ENCODE measurements at regions of chr1 and their contacts with region 1.

Region 1: GRCh38 chr1:27603681-27604578 is at the start of gene AHDC1:
- DNase-seq: peak; percentile 98
- H3K4me3 ChIP-seq: peak within 1 kb of the TSS; percentile 84
- H3K27ac ChIP-seq: peak within 1 kb of the TSS; percentile 36
- H3K4me1 ChIP-seq: peaks cover 23% of the 10 kb centered on the region
- H3K27me3 ChIP-seq: no peaks in the 10 kb centered on the region
- total RNA-seq, gene AHDC1: 5.3 and 5.8 TPM in 2 replicates

Region 2: DNA sequence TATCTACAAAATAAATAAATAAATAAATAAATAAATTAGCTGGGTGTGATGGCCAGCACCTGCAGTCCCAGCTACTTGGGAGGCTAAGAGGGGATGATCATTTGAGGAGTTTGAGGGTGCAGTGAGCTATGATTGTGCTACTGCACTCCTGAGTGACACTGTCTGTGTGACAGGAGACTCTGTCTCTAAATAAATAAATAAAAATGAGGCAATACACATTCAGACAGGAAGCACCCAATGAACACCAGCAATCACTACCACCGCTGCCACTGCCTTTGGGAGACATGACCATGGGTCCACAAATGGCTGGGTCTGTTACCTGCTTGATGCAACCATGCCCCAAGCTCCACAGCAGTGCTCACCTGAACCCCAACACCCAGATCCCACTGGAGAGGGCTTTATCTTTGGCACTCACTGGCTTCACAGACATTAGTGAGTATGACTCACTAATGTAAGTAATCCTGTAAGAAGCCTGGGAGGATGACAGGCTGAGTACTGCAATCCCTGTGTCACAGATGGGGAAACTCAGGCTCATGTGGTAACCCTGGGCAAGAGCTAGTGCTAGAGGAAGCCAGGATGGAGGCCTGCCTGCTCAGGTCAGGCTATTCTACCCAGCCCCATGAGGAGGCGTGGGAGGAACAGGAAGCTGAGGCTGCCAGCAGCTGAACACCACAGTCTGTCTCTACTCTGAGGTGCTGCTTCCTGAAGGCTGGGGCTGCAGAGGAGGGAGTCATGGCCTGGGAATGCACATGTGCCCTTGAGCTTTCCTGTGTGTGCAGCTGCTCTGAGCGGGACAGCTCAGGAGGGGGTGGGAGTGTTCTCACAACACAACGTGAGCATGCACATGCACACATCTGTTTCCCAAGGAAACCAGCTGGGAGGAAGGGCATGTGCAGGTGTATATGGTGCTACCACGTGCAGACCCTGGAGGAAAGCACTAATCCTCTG is 492.0 kb before region 1 on chr1:
- in situ Hi-C with region 1: loop called (anchors 25 kb)
- DNase-seq: peak; percentile 100
- H3K4me3 ChIP-seq: no peak overlapping the region
- H3K27ac ChIP-seq: peak overlapping the region; percentile 86
- H3K4me1 ChIP-seq: peaks cover 28% of the 10 kb centered on the region
- H3K27me3 ChIP-seq: no peaks in the 10 kb centered on the region

Region 3: GRCh38 chr1:27321813-27322577 is 281.9 kb before region 1 on chr1 and contains the start of gene TMEM222:
- in situ Hi-C with region 1: no loop called
- DNase-seq: peak; percentile 99
- H3K4me3 ChIP-seq: peak within 1 kb of the TSS; percentile 91
- H3K27ac ChIP-seq: peak within 1 kb of the TSS; percentile 89
- H3K4me1 ChIP-seq: peaks cover 24% of the 10 kb centered on the region
- H3K27me3 ChIP-seq: no peaks in the 10 kb centered on the region
- total RNA-seq, gene TMEM222: 46.7 and 53.0 TPM in 2 replicates

Region 4: GRCh38 chr1:27416387-27417111 is 187.4 kb before region 1 on chr1:
- in situ Hi-C with region 1: loop called (anchors 25 kb)
- DNase-seq: peak; percentile 80
- H3K4me3 ChIP-seq: no peak overlapping the region
- H3K27ac ChIP-seq: no peak overlapping the region
- H3K4me1 ChIP-seq: peaks cover 18% of the 10 kb centered on the region
- H3K27me3 ChIP-seq: no peaks in the 10 kb centered on the region

Region 5: GRCh38 chr1:27668808-27669723 is 65.1 kb after region 1 on chr1:
- in situ Hi-C with region 1: loop called (anchors 5 kb)
- DNase-seq: peak; percentile 64
- H3K4me3 ChIP-seq: peak overlapping the region; percentile 66
- H3K27ac ChIP-seq: no peak overlapping the region
- H3K4me1 ChIP-seq: peaks cover 12% of the 10 kb centered on the region
- H3K27me3 ChIP-seq: no peaks in the 10 kb centered on the region

Measured in GM23248 (cell line).